ENCODE measurements at regions of chr1 and their contacts with region 1.

Region 1: DNA sequence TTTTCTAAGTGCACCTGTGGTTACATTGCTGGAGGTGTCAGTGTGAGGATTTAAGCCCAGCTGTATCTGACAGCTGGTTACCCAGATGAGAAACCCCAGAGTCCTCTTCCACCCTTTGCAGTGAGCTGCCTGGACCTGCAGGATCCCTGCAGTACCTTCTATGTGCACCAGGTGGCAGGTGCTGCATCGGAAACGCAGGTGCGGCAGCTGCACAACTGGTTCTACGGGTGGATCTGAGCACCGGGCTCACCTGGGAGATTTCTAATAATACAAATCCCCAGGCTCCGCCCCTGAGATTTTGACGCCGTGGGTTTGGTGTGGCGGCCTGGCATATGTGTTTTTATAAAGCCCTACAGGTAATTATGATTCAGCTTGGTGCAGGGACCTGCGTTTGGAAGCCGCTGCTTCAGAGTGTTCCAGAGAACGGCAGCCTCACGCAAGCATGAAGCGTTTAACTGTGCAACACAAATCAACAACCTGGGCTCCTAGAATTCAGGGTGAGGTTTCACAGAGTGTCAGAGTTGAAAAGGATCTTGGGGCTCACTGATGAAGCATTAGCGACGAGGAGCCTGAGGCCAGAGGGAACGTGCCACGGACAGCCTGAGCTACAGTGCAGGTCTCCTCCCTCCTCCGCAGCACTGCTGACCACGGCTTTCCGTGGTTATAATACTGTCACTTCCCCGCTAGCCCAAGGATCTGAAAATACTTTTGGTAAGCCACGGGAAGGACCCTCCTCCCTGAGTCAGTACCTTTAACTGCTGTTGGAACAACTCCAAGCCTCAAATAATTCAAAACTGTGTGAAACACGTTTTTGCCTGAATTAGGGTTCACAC is 96.7 kb upstream of the TRABD2B start:
- DNase-seq: peak; percentile 85
- H3K4me3 ChIP-seq: peak overlapping the region; percentile 7 to 44; a peak in 2 of 4 replicates
- H3K27ac ChIP-seq: no peak overlapping the region
- H3K4me1 ChIP-seq: peaks cover 0 to 3% of the 10 kb centered on the region in 2 experiments; a peak in 1 of 4 replicates
- H3K27me3 ChIP-seq: peaks cover 15% of the 10 kb centered on the region
- CTCF ChIP-seq: peak; percentile 71
- EP300 ChIP-seq: no peak
- RAD21 ChIP-seq: peak; percentile 69

Region 2: DNA sequence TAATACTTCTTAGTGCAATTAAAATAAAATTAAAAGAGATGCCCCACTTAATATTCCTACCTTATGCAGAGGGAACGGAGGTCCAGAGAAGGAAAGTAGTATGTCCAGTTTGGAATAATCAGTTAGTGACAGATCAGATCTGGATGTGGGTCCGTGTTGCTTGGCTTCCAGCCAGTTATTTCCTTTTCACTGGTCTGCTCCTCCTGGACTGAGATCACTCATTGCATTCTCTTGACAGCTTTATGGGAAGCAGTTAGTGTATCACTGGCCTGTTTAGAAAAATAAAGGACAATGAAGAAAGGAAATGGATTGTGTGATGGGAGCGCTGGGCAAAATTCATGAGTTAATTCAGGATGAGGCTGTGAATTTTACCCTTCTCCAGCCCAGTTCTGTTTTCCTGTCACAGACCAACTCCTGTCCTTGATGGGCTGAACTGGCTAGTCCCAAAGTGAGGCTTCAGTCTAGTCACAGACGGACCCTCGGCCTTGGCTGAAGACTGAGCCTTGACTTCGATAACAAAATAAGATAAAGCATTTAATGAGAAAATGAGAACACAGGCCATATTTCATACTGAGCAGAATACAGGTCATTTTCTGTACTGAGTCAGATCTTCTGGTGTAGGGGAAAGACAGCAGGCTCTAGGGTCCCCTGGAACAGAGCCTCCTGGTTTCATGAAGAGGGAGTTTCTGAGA is 11.5 kb before region 1 on chr1:
- CTCF ChIA-PET with region 1: interaction called, 25 read pairs
- POLR2A ChIA-PET with region 1: no interaction called
- DNase-seq: peak; percentile 65
- H3K4me3 ChIP-seq: no peak overlapping the region
- H3K27ac ChIP-seq: no peak overlapping the region
- H3K4me1 ChIP-seq: peaks cover 0 to 8% of the 10 kb centered on the region in 2 experiments; a peak in 1 of 4 replicates
- H3K27me3 ChIP-seq: no peaks in the 10 kb centered on the region; the same call in 1 of the 2 replicates
- CTCF ChIP-seq: no peak
- EP300 ChIP-seq: no peak
- RAD21 ChIP-seq: no peak

Region 3: GRCh38 chr1:48109390-48110013 is 15.6 kb after region 1 on chr1:
- CTCF ChIA-PET with region 1: interaction called, 23 read pairs
- POLR2A ChIA-PET with region 1: no interaction called
- DNase-seq: peak; percentile 36
- H3K4me3 ChIP-seq: no peak overlapping the region
- H3K27ac ChIP-seq: no peak overlapping the region
- H3K4me1 ChIP-seq: no peaks in the 10 kb centered on the region
- H3K27me3 ChIP-seq: no peaks in the 10 kb centered on the region; the same call in 1 of the 2 replicates
- CTCF ChIP-seq: peak; percentile 86
- EP300 ChIP-seq: no peak
- RAD21 ChIP-seq: peak; percentile 93

Region 4: GRCh38 chr1:48196237-48196636 is 102.3 kb after region 1 on chr1:
- CTCF ChIA-PET with region 1: interaction called, 57 read pairs
- POLR2A ChIA-PET with region 1: no interaction called
- DNase-seq: no peak
- H3K4me3 ChIP-seq: no peak overlapping the region
- H3K27ac ChIP-seq: no peak overlapping the region
- H3K4me1 ChIP-seq: no peaks in the 10 kb centered on the region; a peak in 1 of 4 replicates
- H3K27me3 ChIP-seq: peaks cover 4% of the 10 kb centered on the region; the same call in 1 of the 2 replicates
- CTCF ChIP-seq: no peak
- EP300 ChIP-seq: no peak
- RAD21 ChIP-seq: no peak

Region 5: GRCh38 chr1:48236716-48237470 is 143.0 kb after region 1 on chr1:
- CTCF ChIA-PET with region 1: interaction called, 24 read pairs
- POLR2A ChIA-PET with region 1: no interaction called
- DNase-seq: peak; percentile 62
- H3K4me3 ChIP-seq: no peak overlapping the region
- H3K27ac ChIP-seq: no peak overlapping the region
- H3K4me1 ChIP-seq: no peaks in the 10 kb centered on the region; a peak in 1 of 4 replicates
- H3K27me3 ChIP-seq: no peaks in the 10 kb centered on the region
- CTCF ChIP-seq: peak; percentile 59
- EP300 ChIP-seq: no peak
- RAD21 ChIP-seq: peak; percentile 81

Measured in SK-N-SH (cell line).